PC-9 (cell line): ENCODE measurements at regions of chr3 and their contacts with region 1.

Region 1: DNA sequence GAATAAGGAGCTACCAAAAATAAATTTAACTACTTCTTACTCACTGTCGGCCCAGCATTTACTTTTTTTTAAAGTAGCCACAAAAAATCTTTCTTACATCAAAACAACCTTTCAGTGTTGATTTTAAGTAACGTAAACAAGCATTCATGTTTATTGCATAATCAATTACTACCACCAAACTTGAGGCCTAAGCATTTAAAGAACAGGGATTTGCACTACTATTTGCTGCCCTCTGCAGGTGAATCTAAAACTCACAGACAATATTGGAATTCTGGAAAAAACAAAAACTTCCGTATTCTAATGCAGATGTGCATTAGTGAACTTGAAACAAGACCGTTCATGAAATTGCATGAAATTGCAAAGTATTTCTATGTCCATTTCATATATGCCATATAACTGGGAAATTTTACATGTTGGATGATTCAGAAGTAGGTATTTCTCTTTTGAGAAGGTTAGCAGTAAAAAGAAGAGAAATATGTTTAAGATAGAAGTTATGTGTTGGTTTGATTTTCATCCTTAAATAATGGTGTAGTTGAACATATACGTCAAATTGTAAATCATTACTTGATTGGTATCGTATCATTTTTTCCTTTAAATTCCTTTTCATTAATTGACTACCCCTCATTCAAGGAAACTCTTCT is 55.6 kb downstream of the CGGBP1 start:
- DNase-seq: peak in 1 of 2 experiments; percentile 45
- H3K4me3 ChIP-seq: no peak overlapping the region
- H3K27ac ChIP-seq: no peak overlapping the region
- H3K4me1 ChIP-seq: no peaks in the 10 kb centered on the region
- H3K27me3 ChIP-seq: no peaks in the 10 kb centered on the region
- CTCF ChIP-seq: peak; percentile 90

Region 2: DNA sequence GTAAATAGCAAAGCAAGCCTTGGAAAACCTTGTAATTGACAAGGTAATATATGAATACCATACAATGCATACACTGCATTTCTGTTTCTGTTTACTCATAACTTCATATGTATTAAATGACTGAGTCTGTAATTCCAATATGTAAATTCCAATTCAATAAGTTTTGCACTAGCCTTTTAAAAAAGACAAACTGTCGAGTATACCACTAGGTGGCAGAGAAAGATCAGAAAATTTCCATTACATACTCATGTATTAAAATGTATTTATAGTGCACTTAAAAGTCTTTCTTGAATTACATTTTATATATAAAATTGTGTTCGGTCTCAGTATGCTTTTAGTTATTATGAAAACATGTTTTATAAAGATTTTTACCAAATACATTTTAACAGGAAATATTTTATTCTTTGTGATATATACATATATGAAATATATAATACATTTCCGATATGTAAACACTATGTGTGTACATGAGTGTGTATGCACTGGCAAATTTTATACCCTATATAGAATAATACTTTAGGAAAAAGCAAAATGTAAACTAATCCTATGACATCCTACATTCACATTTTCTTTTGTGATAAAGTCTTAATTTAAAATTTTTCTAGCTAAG is 1229.0 kb before region 1 on chr3:
- CTCF ChIA-PET with region 1: no interaction called
- POLR2A ChIA-PET with region 1: no interaction called
- intact Hi-C with region 1: loop called (anchors 2 kb)
- DNase-seq: peak in 1 of 2 experiments; percentile 44
- H3K4me3 ChIP-seq: no peak overlapping the region
- H3K27ac ChIP-seq: no peak overlapping the region
- H3K4me1 ChIP-seq: no peaks in the 10 kb centered on the region
- H3K27me3 ChIP-seq: no peaks in the 10 kb centered on the region
- CTCF ChIP-seq: peak; percentile 81

Region 3: GRCh38 chr3:87167628-87168456 is 835.4 kb before region 1 on chr3:
- CTCF ChIA-PET with region 1: no interaction called
- POLR2A ChIA-PET with region 1: no interaction called
- intact Hi-C with region 1: loop called (anchors 10 kb)
- DNase-seq: peak in 1 of 2 experiments; percentile 20
- H3K4me3 ChIP-seq: peak overlapping the region; percentile 39; the same call in 1 of the 2 replicates
- H3K27ac ChIP-seq: no peak overlapping the region
- H3K4me1 ChIP-seq: no peaks in the 10 kb centered on the region
- H3K27me3 ChIP-seq: no peaks in the 10 kb centered on the region
- CTCF ChIP-seq: peak; percentile 77

Region 4: DNA sequence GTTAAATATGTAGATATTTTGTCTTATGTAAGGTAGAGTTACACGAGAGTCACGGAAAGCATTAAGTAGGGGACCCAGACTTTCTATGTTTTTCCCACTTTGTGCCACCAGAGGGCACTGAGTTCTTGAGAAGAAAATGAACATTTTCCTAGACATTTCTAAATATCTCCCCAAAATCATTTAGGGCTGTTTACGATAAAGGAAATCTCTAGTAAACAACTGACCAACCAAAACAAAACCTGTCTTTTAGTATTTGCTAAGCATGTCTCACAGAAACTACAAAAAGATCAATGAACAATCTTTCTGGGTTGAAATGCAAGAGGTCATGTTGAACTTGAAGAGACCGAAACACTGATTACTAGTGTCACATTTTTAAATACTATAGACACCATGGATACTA is 743.0 kb before region 1 on chr3:
- CTCF ChIA-PET with region 1: interaction called, 3 read pairs
- POLR2A ChIA-PET with region 1: no interaction called
- intact Hi-C with region 1: loop called (anchors 2 kb)
- DNase-seq: peak; percentile 20 to 50
- H3K4me3 ChIP-seq: no peak overlapping the region
- H3K27ac ChIP-seq: no peak overlapping the region
- H3K4me1 ChIP-seq: no peaks in the 10 kb centered on the region
- H3K27me3 ChIP-seq: no peaks in the 10 kb centered on the region
- CTCF ChIP-seq: peak; percentile 84

Region 5: DNA sequence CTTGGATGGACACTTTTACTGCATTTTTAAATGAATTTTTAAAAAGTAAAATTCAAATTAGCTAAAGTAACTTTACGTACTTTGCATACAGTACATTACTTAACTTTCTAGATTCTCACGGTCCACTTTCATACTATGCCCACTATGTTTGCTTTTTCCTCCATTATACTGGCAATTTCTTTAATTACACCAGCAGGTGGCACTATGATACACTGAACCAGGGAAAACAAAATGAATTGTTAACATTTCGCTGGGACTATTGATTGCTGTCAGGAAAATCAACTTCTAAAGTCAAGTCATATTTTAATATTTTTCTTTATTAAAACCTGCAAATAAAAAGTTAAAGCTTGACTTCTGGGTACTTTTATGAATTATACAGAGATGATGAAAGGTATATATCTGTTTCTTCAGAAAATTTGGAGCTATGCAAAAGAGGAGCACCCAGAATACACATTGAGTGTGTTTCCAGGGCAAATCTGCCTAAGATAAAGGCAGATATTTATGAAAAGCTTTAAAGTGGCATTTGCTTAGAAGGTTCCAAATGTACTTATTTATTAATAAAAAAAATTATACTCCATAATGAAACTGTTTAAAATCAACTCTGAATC is 705.0 kb before region 1 on chr3:
- CTCF ChIA-PET with region 1: no interaction called
- POLR2A ChIA-PET with region 1: no interaction called
- intact Hi-C with region 1: loop called (anchors 1 kb)
- DNase-seq: no peak
- H3K4me3 ChIP-seq: no peak overlapping the region
- H3K27ac ChIP-seq: no peak overlapping the region
- H3K4me1 ChIP-seq: no peaks in the 10 kb centered on the region
- H3K27me3 ChIP-seq: no peaks in the 10 kb centered on the region
- CTCF ChIP-seq: peak; percentile 89

Region 6: GRCh38 chr3:87503900-87504508 is 499.2 kb before region 1 on chr3:
- CTCF ChIA-PET with region 1: no interaction called
- POLR2A ChIA-PET with region 1: no interaction called
- intact Hi-C with region 1: loop called (anchors 2 kb)
- DNase-seq: peak; percentile 9 to 57
- H3K4me3 ChIP-seq: no peak overlapping the region
- H3K27ac ChIP-seq: no peak overlapping the region
- H3K4me1 ChIP-seq: no peaks in the 10 kb centered on the region
- H3K27me3 ChIP-seq: no peaks in the 10 kb centered on the region
- CTCF ChIP-seq: peak; percentile 82

Region 7: DNA sequence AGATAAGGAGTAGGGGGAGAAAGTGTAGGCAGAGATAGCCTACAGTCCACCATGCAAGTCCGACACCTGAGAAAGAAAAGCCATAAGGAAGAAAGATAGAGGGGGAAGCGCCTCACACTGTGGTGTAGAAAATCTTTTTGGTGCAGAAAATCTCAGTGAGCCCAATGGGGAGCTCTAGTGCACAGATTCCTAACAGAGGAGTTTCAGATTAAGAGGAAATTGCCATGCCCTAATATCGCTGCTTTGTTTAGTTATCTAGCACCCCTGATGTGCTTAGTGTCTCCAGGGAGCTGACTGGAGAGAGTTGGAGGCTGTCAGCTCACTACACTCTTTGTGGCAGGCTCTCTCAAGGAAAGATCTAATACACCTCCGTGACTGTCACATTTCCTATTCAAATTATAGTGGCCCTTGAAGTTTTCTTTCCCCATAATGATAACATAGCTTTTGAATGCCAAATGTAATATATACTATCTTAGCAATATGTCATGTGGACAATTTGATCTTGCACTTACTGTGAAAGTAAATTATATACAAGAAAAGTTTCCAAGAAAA is 21.8 kb after region 1 on chr3:
- CTCF ChIA-PET with region 1: no interaction called
- POLR2A ChIA-PET with region 1: no interaction called
- intact Hi-C with region 1: no loop called
- DNase-seq: no peak
- H3K4me3 ChIP-seq: no peak overlapping the region
- H3K27ac ChIP-seq: no peak overlapping the region
- H3K4me1 ChIP-seq: no peaks in the 10 kb centered on the region
- H3K27me3 ChIP-seq: no peaks in the 10 kb centered on the region
- CTCF ChIP-seq: no peak

Region 8: DNA sequence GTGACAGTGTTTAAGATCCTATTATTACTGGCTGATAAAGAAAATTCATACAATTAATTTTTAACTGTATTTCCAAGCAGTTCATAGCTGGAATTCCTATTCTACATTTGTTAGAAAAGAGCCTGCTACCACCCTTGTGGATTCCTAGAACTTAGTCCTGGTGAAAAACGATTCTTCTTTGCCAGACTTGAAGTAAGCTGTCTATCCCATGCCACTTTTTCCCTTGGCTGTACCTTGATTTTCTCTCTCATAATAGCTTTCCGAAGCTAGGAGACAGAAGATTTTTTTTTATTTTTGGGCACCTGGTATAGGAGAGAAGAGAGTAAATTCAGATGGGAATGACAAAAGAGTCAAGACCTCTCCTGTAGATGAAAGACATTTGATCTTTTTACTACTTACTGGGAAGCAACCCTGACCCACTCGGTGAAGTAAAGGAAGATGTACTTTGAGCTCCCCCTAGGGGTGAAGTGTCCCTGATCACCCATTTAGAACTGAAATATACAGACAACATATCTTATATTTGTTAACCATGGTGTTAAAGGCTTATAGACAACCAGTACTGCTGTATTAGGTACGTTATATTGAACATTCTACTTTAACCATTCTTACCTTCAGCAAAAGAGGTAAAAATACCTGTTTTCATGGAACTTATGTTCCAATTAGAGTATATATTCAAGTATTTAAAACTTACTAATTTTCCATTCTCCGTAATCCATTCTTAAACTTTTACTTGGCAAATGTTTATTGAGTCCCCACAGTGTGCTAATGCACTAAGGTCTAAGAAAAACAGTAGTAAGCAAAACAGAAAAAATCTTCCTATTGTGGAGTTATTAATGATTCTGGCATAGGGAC is 110.3 kb after region 1 on chr3:
- CTCF ChIA-PET with region 1: no interaction called
- POLR2A ChIA-PET with region 1: no interaction called
- intact Hi-C with region 1: loop called (anchors 1 kb)
- DNase-seq: peak in 1 of 2 experiments; percentile 25
- H3K4me3 ChIP-seq: no peak overlapping the region
- H3K27ac ChIP-seq: no peak overlapping the region
- H3K4me1 ChIP-seq: no peaks in the 10 kb centered on the region
- H3K27me3 ChIP-seq: no peaks in the 10 kb centered on the region
- CTCF ChIP-seq: peak; percentile 80